PC-9 (cell line): ENCODE measurements at regions of chr17 and their contacts with region 1.

Region 1: DNA sequence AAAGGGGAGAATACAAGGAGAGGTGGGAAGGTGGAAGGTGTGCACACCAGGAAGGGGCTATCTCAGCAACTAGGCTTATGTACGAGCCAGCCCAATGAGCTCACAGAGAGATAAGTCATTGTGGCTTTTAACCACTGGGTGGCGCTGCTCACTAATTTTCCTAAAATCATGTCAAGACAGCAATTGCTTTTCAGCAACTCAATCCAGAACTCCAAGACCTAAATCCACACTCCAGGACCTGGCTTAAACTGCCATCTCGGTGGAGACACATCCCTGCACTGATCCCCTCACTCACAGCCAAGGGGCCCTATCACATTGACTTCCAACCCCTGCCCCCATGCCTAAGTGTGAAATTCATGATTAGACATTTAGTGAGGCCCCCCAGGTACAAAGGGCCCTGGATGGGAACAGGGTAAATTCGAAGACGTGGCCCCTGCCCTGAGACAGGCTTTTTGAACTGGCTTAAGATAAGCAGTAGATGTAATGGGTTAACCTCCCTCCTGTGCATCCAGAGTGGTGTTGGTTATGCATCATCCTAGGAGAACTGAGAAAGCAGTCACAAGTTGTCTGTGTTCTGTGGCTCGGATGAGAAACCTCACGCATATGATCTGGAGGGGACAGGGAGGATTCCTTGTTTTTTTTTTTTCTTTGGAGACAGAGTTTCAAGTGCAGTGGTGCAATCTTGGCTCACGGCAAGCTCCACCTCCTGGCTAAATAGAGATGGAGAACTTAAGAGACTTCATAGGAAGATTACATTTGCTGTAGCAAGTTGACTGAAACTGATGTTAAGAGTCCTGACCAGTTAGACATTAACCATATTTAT is 11.5 kb downstream of the CCL16 start:
- DNase-seq: peak in 1 of 2 experiments; percentile 57
- H3K4me3 ChIP-seq: no peak overlapping the region
- H3K27ac ChIP-seq: no peak overlapping the region
- H3K4me1 ChIP-seq: no peaks in the 10 kb centered on the region
- H3K27me3 ChIP-seq: peaks cover 51% of the 10 kb centered on the region; the same call in 1 of the 2 replicates
- CTCF ChIP-seq: peak; percentile 86

Region 2: GRCh38 chr17:35337364-35337763 is 632.4 kb before region 1 on chr17:
- CTCF ChIA-PET with region 1: no interaction called
- POLR2A ChIA-PET with region 1: no interaction called
- intact Hi-C with region 1: no loop called
- DNase-seq: no peak
- H3K4me3 ChIP-seq: no peak overlapping the region
- H3K27ac ChIP-seq: no peak overlapping the region
- H3K4me1 ChIP-seq: no peaks in the 10 kb centered on the region
- H3K27me3 ChIP-seq: peaks cover 63% of the 10 kb centered on the region
- CTCF ChIP-seq: no peak

Region 3: DNA sequence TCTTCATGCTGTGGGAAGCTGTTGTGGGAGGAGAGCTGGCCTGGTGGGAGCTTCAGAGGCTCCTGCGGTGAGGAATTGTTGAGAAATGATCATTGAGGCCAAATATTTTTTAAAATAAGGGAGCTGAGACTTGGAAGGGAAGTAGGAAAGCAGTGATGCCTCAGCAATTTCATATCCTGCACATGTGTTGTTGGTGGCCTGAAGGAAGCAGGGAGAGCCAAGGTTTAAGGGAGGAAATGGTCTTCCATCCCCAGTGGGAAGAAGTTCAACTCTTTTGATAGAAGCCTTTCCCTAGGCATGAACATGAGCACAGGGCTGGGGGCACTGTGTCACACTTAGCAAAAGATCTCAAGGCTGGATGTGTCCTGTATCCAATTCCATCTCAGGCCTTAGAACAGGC is 16.9 kb after region 1 on chr17 and contains the start of gene CCL14:
- CTCF ChIA-PET with region 1: no interaction called
- POLR2A ChIA-PET with region 1: no interaction called
- intact Hi-C with region 1: no loop called
- DNase-seq: no peak
- H3K4me3 ChIP-seq: no peak within 1 kb of the TSS
- H3K27ac ChIP-seq: no peak within 1 kb of the TSS
- H3K4me1 ChIP-seq: no peaks in the 10 kb centered on the region
- H3K27me3 ChIP-seq: peaks cover 73% of the 10 kb centered on the region
- CTCF ChIP-seq: no peak
- total RNA-seq, gene CCL14: not detected in 2 replicates

Region 4: GRCh38 chr17:36008998-36009665 is 39.4 kb after region 1 on chr17:
- CTCF ChIA-PET with region 1: no interaction called
- POLR2A ChIA-PET with region 1: no interaction called
- intact Hi-C with region 1: no loop called
- DNase-seq: no peak
- H3K4me3 ChIP-seq: no peak overlapping the region
- H3K27ac ChIP-seq: no peak overlapping the region
- H3K4me1 ChIP-seq: no peaks in the 10 kb centered on the region
- H3K27me3 ChIP-seq: peaks cover 77% of the 10 kb centered on the region
- CTCF ChIP-seq: peak; percentile 54

Region 5: DNA sequence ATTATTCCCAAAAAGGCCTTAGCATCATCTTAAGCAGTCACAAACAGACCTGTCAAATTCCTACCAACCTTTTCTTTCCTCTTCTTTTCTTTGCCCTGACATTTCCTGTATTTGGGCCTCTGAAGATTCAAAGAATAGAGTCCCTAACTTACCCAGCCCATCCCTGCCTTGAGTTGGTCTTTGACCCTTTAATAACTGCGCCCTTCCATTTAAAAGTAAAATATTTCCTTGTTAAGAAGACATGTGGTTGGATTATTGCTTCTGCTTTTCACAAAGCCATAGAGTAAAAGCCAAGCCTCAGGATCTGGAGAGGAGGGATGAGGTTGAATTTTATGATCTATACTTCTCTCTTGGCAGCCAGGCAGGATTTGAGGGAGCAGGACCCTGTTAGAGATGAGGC is 61.2 kb after region 1 on chr17:
- CTCF ChIA-PET with region 1: no interaction called
- POLR2A ChIA-PET with region 1: no interaction called
- intact Hi-C with region 1: no loop called
- DNase-seq: no peak
- H3K4me3 ChIP-seq: no peak overlapping the region
- H3K27ac ChIP-seq: no peak overlapping the region
- H3K4me1 ChIP-seq: no peaks in the 10 kb centered on the region
- H3K27me3 ChIP-seq: peaks cover 56% of the 10 kb centered on the region
- CTCF ChIP-seq: no peak

Region 6: GRCh38 chr17:36148559-36149295 is 179.0 kb after region 1 on chr17:
- CTCF ChIA-PET with region 1: interaction called, 3 read pairs
- POLR2A ChIA-PET with region 1: no interaction called
- intact Hi-C with region 1: loop called (anchors 1 kb)
- DNase-seq: peak in 1 of 2 experiments; percentile 41
- H3K4me3 ChIP-seq: no peak overlapping the region
- H3K27ac ChIP-seq: no peak overlapping the region
- H3K4me1 ChIP-seq: no peaks in the 10 kb centered on the region
- H3K27me3 ChIP-seq: peaks cover 45% of the 10 kb centered on the region
- CTCF ChIP-seq: peak; percentile 95

Region 7: GRCh38 chr17:36183001-36183971 is 213.5 kb after region 1 on chr17:
- CTCF ChIA-PET with region 1: interaction called, 14 read pairs
- POLR2A ChIA-PET with region 1: no interaction called
- intact Hi-C with region 1: no loop called
- DNase-seq: peak in 1 of 2 experiments; percentile 28
- H3K4me3 ChIP-seq: no peak overlapping the region
- H3K27ac ChIP-seq: no peak overlapping the region
- H3K4me1 ChIP-seq: no peaks in the 10 kb centered on the region
- H3K27me3 ChIP-seq: peaks cover 79% of the 10 kb centered on the region
- CTCF ChIP-seq: no peak

Region 8: GRCh38 chr17:36486204-36487194 is 516.7 kb after region 1 on chr17 and contains the start of gene ZNHIT3:
- CTCF ChIA-PET with region 1: interaction called, 8 read pairs
- POLR2A ChIA-PET with region 1: no interaction called
- intact Hi-C with region 1: loop called (anchors 2 kb)
- DNase-seq: peak; percentile 83 to 86
- H3K4me3 ChIP-seq: peak within 1 kb of the TSS; percentile 69
- H3K27ac ChIP-seq: 0 out of 2 replicates have a peak within 1 kb of the TSS, but pooled peaks have one; percentile 7
- H3K4me1 ChIP-seq: peaks cover 6% of the 10 kb centered on the region; the same call in 1 of the 2 replicates
- H3K27me3 ChIP-seq: peaks cover 9% of the 10 kb centered on the region; the same call in 1 of the 2 replicates
- CTCF ChIP-seq: no peak
- total RNA-seq, gene ZNHIT3: 32.1 and 35.5 TPM in 2 replicates